Activated CD8-positive, alpha-beta T cell treated with anti-CD3 and anti-CD28 coated beads for 36 hours (primary cell): ENCODE measurements at regions of chr22 and their contacts with region 1.

Region 1: DNA sequence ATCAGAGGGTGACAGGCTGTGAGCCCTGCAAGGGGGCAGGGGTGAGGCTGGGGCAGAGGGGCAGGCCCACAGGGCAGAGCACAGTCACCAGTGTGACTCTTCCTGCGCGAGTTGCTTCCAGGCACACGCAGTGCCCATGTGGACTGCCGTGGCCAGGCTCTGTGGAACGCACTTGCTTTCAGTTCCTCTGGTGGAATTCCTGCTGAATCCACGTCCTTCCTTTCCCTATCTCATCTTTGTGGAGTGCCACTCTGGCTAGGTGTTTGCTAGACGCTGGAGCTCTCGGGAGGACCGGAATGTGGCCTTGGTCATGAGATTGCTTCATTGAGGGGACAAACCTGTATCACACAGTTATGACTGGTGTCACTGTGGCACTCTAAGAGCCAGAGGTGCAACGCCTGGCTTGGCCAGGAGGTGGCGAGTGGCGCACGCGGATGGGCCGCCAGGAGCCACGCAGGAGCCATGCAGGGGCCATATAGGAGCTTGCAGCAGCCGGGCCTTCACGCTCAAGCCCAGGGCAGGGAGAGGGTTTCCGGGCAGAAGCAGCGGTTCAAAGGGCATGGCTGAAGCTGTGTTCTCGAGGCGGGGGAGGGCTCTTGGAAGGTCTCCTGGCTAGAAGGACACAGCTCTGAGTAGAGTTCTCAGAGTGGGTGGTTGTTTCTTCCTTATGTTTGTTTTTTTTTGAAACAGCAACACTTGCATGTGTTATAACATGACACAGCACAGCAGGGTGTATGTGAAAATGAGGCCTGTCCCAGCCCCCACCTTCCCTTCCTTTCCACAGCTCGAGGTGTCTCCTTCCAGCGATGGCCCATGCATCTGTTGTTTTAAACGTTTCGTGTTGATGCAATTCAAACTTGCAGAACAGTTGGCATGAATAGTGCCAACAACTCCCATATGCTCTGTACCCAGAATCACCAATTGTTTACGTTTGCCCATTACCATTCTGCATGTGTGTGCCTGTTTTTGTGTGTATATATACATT is 36.2 kb downstream of the TBC1D22A start:
- DNase-seq: peak; percentile 85
- ATAC-seq: peak; percentile 94
- H3K4me3 Mint-ChIP-seq: no peak overlapping the region
- H3K27ac Mint-ChIP-seq: peak overlapping the region; percentile 73
- H3K4me1 Mint-ChIP-seq: peaks cover 26% of the 10 kb centered on the region
- H3K27me3 Mint-ChIP-seq: no peaks in the 10 kb centered on the region
- CTCF ChIP-seq: peak; percentile 92

Region 2: GRCh38 chr22:46661221-46661851 is 137.3 kb before region 1 on chr22:
- CTCF ChIA-PET with region 1: no interaction called
- POLR2A ChIA-PET with region 1: no interaction called
- intact Hi-C with region 1: no loop called
- DNase-seq: peak; percentile 47
- ATAC-seq: peak; percentile 82
- H3K4me3 Mint-ChIP-seq: no peak overlapping the region
- H3K27ac Mint-ChIP-seq: peak overlapping the region; percentile 37
- H3K4me1 Mint-ChIP-seq: peaks cover 21% of the 10 kb centered on the region
- H3K27me3 Mint-ChIP-seq: no peaks in the 10 kb centered on the region
- CTCF ChIP-seq: no peak

Region 3: GRCh38 chr22:46737976-46738646 is 60.5 kb before region 1 on chr22 and contains the start of gene CERK:
- CTCF ChIA-PET with region 1: interaction called, 16 read pairs
- POLR2A ChIA-PET with region 1: interaction called, 3 read pairs
- intact Hi-C with region 1: no loop called
- DNase-seq: peak; percentile 43
- ATAC-seq: peak; percentile 43
- H3K4me3 Mint-ChIP-seq: peak within 1 kb of the TSS; percentile 93
- H3K27ac Mint-ChIP-seq: peak within 1 kb of the TSS; percentile 98
- H3K4me1 Mint-ChIP-seq: peaks cover 36% of the 10 kb centered on the region
- H3K27me3 Mint-ChIP-seq: no peaks in the 10 kb centered on the region
- CTCF ChIP-seq: no peak
- total RNA-seq, gene CERK: 38.4 to 41.8 TPM

Region 4: GRCh38 chr22:46762238-46763050 is 36.2 kb before region 1 on chr22 and contains the start of gene TBC1D22A:
- CTCF ChIA-PET with region 1: interaction called, 191 read pairs
- POLR2A ChIA-PET with region 1: interaction called, 12 read pairs
- intact Hi-C with region 1: loop called (anchors 5 kb)
- DNase-seq: peak; percentile 96
- ATAC-seq: peak; percentile 91
- H3K4me3 Mint-ChIP-seq: peak within 1 kb of the TSS; percentile 94
- H3K27ac Mint-ChIP-seq: peak within 1 kb of the TSS; percentile 99
- H3K4me1 Mint-ChIP-seq: peaks cover 51% of the 10 kb centered on the region
- H3K27me3 Mint-ChIP-seq: no peaks in the 10 kb centered on the region
- CTCF ChIP-seq: no peak
- total RNA-seq, gene TBC1D22A: 41.0 to 42.8 TPM

Region 5: DNA sequence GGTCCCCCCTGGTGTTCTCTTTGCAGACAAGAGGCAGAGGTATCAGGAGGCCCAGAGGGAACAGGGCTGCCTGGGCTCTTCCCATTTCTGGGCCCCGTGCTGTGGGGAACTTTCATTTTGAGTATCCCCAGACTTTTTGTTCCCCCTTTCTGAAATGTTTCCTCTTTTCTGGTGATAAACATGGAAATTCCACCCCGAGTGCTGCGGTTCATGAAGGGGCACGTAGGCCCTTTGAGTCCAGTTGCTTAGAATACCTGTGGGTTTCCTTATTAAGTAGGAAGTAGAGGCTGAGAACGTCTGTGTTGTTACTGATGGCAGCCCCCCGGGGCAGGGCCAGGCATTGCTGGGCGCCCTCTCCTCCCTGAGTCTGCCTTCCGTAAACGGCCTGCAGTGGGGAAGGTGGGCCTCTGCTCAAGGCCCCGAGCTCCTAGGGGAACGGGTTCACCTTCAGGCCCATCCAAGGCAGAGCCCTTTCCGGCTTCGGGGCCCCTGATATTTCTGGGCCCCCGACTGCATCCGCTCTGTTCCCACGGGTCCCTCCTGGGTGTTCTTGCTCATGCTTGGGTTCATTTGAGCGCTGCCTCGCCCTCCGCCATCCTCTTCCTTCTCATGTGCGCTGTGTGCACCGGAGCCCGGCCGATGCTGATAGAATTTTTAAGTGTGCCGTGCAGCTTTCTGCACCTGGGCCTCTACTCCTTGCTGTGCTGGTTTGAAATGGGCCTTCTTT is 24.2 kb before region 1 on chr22:
- CTCF ChIA-PET with region 1: interaction called, 22 read pairs
- POLR2A ChIA-PET with region 1: interaction called, 4 read pairs
- intact Hi-C with region 1: no loop called
- DNase-seq: peak; percentile 51
- ATAC-seq: peak; percentile 26
- H3K4me3 Mint-ChIP-seq: peak overlapping the region; percentile 69
- H3K27ac Mint-ChIP-seq: peak overlapping the region; percentile 60
- H3K4me1 Mint-ChIP-seq: peaks cover 73% of the 10 kb centered on the region
- H3K27me3 Mint-ChIP-seq: no peaks in the 10 kb centered on the region
- CTCF ChIP-seq: no peak

Region 6: DNA sequence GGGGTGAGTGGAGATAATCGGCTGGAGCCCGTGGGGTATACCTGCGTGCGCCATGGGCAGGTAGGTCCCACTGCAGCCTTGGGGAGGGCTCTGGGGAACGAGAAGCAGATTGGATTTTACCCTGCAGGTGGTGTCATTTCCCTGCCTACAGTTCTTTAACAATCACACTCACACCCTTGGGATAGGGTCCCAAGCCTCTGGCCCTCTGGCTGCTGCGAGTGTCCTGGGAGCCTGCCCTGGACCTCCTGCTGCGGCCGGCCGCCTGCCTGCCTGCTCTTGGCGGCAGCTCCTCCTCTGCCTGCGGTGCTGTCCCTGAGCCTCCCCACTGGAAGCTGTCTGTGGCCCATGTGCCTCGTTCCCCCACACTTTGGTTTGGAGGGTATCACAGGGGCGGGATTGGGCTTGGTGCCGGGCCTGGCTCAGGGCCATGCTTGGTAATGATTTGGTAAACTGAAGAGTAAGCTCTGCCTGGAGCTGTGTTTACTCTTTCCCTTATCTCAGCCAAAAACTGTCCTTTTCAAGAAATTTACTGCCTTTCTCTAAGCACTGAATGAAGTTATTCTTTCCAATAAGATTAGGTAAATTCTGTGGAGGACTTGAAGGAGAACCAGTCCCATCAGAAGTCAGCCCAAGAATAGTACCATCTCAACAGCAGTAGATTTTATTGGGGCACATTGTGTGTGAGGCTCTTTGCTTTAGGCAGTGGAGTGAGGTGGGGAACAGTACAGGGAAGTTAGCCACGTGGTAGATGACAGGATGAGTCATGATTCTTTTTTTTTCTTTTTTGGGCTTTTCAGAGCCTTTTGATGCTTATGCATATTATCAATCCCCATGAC is 17.5 kb after region 1 on chr22:
- CTCF ChIA-PET with region 1: interaction called, 43 read pairs
- POLR2A ChIA-PET with region 1: interaction called, 4 read pairs
- intact Hi-C with region 1: no loop called
- DNase-seq: no peak
- ATAC-seq: peak; percentile 83
- H3K4me3 Mint-ChIP-seq: no peak overlapping the region
- H3K27ac Mint-ChIP-seq: peak overlapping the region; percentile 35
- H3K4me1 Mint-ChIP-seq: peaks cover 49% of the 10 kb centered on the region
- H3K27me3 Mint-ChIP-seq: no peaks in the 10 kb centered on the region
- CTCF ChIP-seq: no peak